Panc1 (cell line): ENCODE measurements at regions of chr1 and their contacts with region 1.

Region 1: GRCh38 chr1:153742411-153743142 is 14.7 kb downstream of the INTS3 start:
- DNase-seq: no peak
- ATAC-seq: no peak
- H3K4me3 ChIP-seq: no peak overlapping the region
- H3K27ac ChIP-seq: no peak overlapping the region
- H3K4me1 ChIP-seq: no peaks in the 10 kb centered on the region
- H3K27me3 ChIP-seq: no peaks in the 10 kb centered on the region
- CTCF ChIP-seq: no peak

Region 2: GRCh38 chr1:152796421-152796820 is 946.2 kb before region 1 on chr1 and contains the start of gene LCE1D:
- CTCF ChIA-PET with region 1: no interaction called
- POLR2A ChIA-PET with region 1: interaction called, 19 read pairs
- in situ Hi-C with region 1: no loop called
- intact Hi-C with region 1: no loop called
- DNase-seq: no peak
- ATAC-seq: no peak
- H3K4me3 ChIP-seq: no peak within 1 kb of the TSS
- H3K27ac ChIP-seq: no peak within 1 kb of the TSS
- H3K4me1 ChIP-seq: no peaks in the 10 kb centered on the region
- H3K27me3 ChIP-seq: peaks cover 2% of the 10 kb centered on the region; the same call in 1 of the 2 replicates
- CTCF ChIP-seq: no peak
- total RNA-seq, gene LCE1D: not detected